Activated CD4-positive, alpha-beta T cell treated with anti-CD3 and anti-CD28 coated beads for 36 hours (primary cell): ENCODE measurements at regions of chr19 and their contacts with region 1.

Region 1: GRCh38 chr19:50025024-50025789 is at the start of gene VRK3:
- DNase-seq: peak; percentile 98
- ATAC-seq: peak; percentile 91
- H3K4me3 Mint-ChIP-seq: peak within 1 kb of the TSS; percentile 85
- H3K27ac Mint-ChIP-seq: peak within 1 kb of the TSS; percentile 95
- H3K4me1 Mint-ChIP-seq: peaks cover 44% of the 10 kb centered on the region
- H3K27me3 Mint-ChIP-seq: no peaks in the 10 kb centered on the region
- total RNA-seq, gene VRK3: 52.4 to 61.2 TPM

Region 2: GRCh38 chr19:49497047-49497788 is 528.0 kb before region 1 on chr19:
- CTCF ChIA-PET with region 1: no interaction called
- POLR2A ChIA-PET with region 1: no interaction called
- intact Hi-C with region 1: loop called in 1 of 2 experiments (anchors 1 kb)
- DNase-seq: peak; percentile 86
- ATAC-seq: peak; percentile 5
- H3K4me3 Mint-ChIP-seq: peak overlapping the region; percentile 93
- H3K27ac Mint-ChIP-seq: peak overlapping the region; percentile 98
- H3K4me1 Mint-ChIP-seq: peaks cover 47% of the 10 kb centered on the region
- H3K27me3 Mint-ChIP-seq: no peaks in the 10 kb centered on the region

Region 3: DNA sequence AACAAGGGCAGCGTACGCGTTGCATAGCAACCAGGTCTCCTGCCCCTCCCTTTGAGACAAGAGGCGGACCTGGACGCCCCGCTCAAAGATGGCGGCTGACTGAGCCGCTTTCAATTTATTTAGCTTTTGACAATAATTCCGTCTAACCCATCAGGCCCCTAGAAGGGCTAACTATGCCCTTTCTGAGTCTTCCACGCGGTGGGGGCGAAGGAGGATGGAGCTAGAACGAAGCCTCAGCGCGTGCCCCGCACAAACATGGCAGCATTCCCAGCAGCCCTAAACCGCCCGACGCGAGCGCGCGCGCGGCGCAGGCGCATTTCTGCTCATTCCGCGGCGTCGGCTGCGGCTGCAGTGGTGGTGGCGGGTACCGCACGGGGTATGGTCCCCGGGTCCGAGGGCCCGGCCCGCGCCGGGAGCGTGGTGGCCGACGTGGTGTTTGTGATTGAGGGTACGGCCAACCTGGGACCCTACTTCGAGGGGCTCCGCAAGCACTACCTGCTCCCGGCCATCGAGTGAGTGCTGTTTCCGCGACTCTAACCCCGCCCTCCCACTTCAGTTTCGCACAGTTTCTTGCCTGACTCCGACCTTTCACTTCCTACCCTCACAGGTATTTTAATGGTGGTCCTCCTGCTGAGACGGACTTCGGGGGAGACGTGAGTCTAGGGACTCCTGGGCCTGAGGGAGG is 207.1 kb before region 1 on chr19 and contains the start of gene MED25:
- CTCF ChIA-PET with region 1: no interaction called
- POLR2A ChIA-PET with region 1: no interaction called
- intact Hi-C with region 1: loop called in 1 of 2 experiments (anchors 1 kb)
- DNase-seq: peak; percentile 91
- ATAC-seq: peak; percentile 75
- H3K4me3 Mint-ChIP-seq: peak within 1 kb of the TSS; percentile 87
- H3K27ac Mint-ChIP-seq: peak within 1 kb of the TSS; percentile 99
- H3K4me1 Mint-ChIP-seq: peaks cover 26% of the 10 kb centered on the region
- H3K27me3 Mint-ChIP-seq: no peaks in the 10 kb centered on the region
- total RNA-seq, gene MED25: 39.6 to 49.9 TPM

Region 4: DNA sequence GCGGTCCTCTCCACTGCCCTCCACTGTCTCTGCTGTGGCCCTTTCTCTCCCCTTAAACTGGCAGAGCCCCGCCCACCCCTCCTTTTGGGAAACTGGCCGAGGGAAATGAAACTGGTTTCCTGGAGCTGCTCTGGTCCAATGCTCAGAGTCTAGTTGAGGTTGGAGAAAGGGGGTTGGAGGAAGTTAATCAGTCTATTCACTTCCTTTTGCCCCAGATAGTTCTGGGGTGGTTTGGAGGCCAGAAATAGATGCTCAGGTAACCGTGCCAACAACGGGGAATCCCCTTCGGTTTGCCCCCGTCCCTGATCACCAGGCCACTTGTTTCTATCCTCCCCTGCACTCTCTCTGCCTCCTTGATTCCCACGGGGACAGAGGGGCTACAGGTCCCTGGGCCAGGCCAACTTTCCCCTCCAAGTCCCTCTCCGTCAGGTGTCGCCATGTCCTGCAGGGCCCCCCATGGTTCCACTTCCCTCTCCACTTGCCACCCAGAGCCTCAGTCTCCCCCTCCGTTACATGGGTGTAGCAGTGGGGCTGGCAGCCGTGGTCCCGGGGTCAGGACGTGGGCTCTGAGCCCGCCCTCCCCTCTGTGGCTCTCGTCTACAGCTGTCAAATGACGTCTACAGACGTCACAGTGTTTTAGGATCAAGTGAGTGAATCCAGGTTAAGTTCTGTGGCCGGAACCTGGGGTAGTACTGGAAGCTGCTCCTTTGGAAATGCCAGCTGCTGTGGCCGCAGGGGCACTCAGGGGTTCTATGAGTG is 128.2 kb before region 1 on chr19 and contains the start of gene IL4I1:
- CTCF ChIA-PET with region 1: interaction called, 3 read pairs
- POLR2A ChIA-PET with region 1: no interaction called
- intact Hi-C with region 1: loop called in 1 of 2 experiments (anchors 1 kb)
- DNase-seq: peak; percentile 79
- ATAC-seq: peak; percentile 65
- H3K4me3 Mint-ChIP-seq: peak within 1 kb of the TSS; percentile 70
- H3K27ac Mint-ChIP-seq: peak within 1 kb of the TSS; percentile 95
- H3K4me1 Mint-ChIP-seq: peaks cover 49% of the 10 kb centered on the region
- H3K27me3 Mint-ChIP-seq: no peaks in the 10 kb centered on the region
- total RNA-seq, gene IL4I1: 21.2 to 22.2 TPM

Region 5: GRCh38 chr19:50050384-50051224 is 25.4 kb after region 1 on chr19:
- CTCF ChIA-PET with region 1: interaction called, 4 read pairs
- POLR2A ChIA-PET with region 1: no interaction called
- intact Hi-C with region 1: loop called in 1 of 2 experiments (anchors 1 kb)
- DNase-seq: peak; percentile 88
- ATAC-seq: peak; percentile 86
- H3K4me3 Mint-ChIP-seq: peak overlapping the region; percentile 75
- H3K27ac Mint-ChIP-seq: peak overlapping the region; percentile 51
- H3K4me1 Mint-ChIP-seq: peaks cover 10% of the 10 kb centered on the region
- H3K27me3 Mint-ChIP-seq: no peaks in the 10 kb centered on the region

Region 6: DNA sequence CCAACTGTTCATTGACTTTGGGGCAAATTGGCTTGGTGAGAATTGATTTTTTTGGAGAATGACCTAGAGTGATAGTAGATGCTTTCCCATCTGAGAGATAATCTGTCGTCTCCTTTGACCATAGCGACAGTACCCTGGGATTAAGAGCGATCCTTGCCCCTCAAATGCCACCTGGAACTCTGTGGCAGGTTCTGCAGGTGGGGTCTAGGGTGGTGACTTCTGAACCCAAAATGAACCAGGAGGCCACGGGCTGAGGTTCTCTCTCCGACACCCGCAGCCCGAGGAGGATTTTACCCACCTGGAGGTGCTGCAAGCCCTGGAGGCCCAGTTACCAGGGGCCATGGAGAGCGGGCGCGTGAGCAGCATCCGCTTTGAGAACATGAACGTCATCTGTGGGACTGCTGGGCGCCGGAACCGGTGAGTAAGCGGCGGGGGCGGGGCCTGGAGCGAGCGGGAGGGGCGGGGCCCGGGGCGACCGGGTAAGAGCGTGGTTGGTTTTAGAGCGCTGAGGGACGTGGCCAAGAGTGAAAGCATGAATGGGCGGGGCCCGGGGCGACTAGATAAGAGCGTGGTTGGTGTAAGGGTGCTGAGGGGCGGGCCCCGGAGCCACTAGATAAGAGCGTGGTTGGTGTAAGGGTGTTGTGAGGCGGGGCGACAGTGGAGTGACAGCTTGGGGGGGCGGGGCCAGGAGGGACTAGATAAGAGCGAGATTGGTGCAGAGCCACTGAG is 632.7 kb after region 1 on chr19:
- CTCF ChIA-PET with region 1: no interaction called
- POLR2A ChIA-PET with region 1: no interaction called
- intact Hi-C with region 1: loop called in 1 of 2 experiments (anchors 2 kb)
- DNase-seq: peak; percentile 98
- ATAC-seq: peak; percentile 96
- H3K4me3 Mint-ChIP-seq: peak overlapping the region; percentile 76
- H3K27ac Mint-ChIP-seq: peak overlapping the region; percentile 93
- H3K4me1 Mint-ChIP-seq: peaks cover 20% of the 10 kb centered on the region
- H3K27me3 Mint-ChIP-seq: peaks cover 65% of the 10 kb centered on the region